ENCODE measurements at regions of chr18 and their contacts with region 1.

Region 1: GRCh38 chr18:22282311-22283112 is 113.1 kb downstream of the GATA6 start:
- DNase-seq: peak; percentile 72 to 80
- ATAC-seq: peak; percentile 83 to 92 (median 92)
- H3K4me3 ChIP-seq: no peak overlapping the region
- H3K4me3 Mint-ChIP-seq: peak overlapping the region; percentile 62
- H3K27ac ChIP-seq: peak overlapping the region; percentile 89
- H3K27ac Mint-ChIP-seq: peak overlapping the region; percentile 94 to 96
- H3K4me1 ChIP-seq: peaks cover 11% of the 10 kb centered on the region
- H3K4me1 Mint-ChIP-seq: peaks cover 27 to 40% of the 10 kb centered on the region in 2 donors
- H3K27me3 ChIP-seq: no peaks in the 10 kb centered on the region
- H3K27me3 Mint-ChIP-seq: peaks cover 3 to 7% of the 10 kb centered on the region in 2 donors
- CTCF ChIP-seq: no peak

Region 2: GRCh38 chr18:22257022-22257543 is 25.4 kb before region 1 on chr18:
- intact Hi-C with region 1: loop called (anchors 1 kb)
- DNase-seq: no peak
- ATAC-seq: no peak
- H3K4me3 ChIP-seq: no peak overlapping the region
- H3K4me3 Mint-ChIP-seq: no peak overlapping the region
- H3K27ac ChIP-seq: no peak overlapping the region
- H3K27ac Mint-ChIP-seq: peak overlapping the region in 1 of 2 donors; percentile 48
- H3K4me1 ChIP-seq: peaks cover 33% of the 10 kb centered on the region
- H3K4me1 Mint-ChIP-seq: peaks cover 45 to 57% of the 10 kb centered on the region in 2 donors
- H3K27me3 ChIP-seq: no peaks in the 10 kb centered on the region
- H3K27me3 Mint-ChIP-seq: peaks cover 28 to 34% of the 10 kb centered on the region in 2 donors
- CTCF ChIP-seq: no peak

Region 3: DNA sequence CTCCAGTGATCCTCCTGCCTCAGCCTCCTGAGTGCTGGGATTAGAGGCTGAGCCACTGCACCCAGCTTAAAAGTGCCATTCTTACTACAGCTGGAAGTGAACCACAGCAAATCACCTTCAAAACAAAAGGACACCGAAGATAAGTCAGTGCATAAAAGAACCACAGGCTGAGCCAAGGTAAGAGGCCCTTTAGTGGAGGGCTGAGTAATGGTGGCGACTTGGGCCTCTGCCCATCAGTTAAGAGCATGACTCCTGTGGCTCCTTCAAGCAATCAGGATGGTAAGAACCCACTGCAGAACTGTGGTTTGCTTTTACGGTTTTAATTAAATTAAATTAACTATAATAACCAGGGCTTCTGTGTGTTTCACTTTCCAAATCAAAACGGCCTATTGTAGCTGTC is 60.1 kb after region 1 on chr18:
- intact Hi-C with region 1: loop called (anchors 1 kb)
- DNase-seq: peak; percentile 38 to 74
- ATAC-seq: peak; percentile 15 to 28 (median 23)
- H3K4me3 ChIP-seq: no peak overlapping the region
- H3K4me3 Mint-ChIP-seq: peak overlapping the region; percentile 61
- H3K27ac ChIP-seq: peak overlapping the region; percentile 94
- H3K27ac Mint-ChIP-seq: peak overlapping the region; percentile 92 to 97
- H3K4me1 ChIP-seq: peaks cover 87% of the 10 kb centered on the region
- H3K4me1 Mint-ChIP-seq: peaks cover 77 to 89% of the 10 kb centered on the region in 2 donors
- H3K27me3 ChIP-seq: no peaks in the 10 kb centered on the region
- H3K27me3 Mint-ChIP-seq: no peaks in the 10 kb centered on the region
- CTCF ChIP-seq: no peak

Region 4: DNA sequence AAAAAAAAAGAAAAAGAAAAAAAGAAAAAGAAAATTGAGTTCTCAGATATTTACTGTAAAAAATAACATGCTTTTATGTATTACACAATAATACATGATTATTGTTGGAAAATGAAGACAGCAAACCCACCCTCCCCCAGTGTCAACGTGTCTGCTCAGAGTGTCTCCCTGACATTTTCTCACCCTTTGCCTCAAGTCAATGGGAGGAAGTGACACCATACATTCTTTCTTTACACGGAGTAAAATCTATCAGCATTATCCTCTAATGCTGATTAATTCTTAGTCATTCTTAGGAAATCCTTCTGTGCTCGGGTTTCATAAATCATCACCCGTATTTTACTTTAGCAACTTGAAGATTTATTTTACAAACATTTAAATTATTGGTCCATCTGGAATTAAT is 103.2 kb after region 1 on chr18:
- intact Hi-C with region 1: loop called (anchors 2 kb)
- DNase-seq: peak; percentile 38 to 51
- ATAC-seq: peak; percentile 95 to 99 (median 95)
- H3K4me3 ChIP-seq: no peak overlapping the region
- H3K4me3 Mint-ChIP-seq: peak overlapping the region; percentile 40
- H3K27ac ChIP-seq: peak overlapping the region; percentile 15
- H3K27ac Mint-ChIP-seq: peak overlapping the region; percentile 83
- H3K4me1 ChIP-seq: peaks cover 16% of the 10 kb centered on the region
- H3K4me1 Mint-ChIP-seq: peaks cover 46% of the 10 kb centered on the region in 2 donors
- H3K27me3 ChIP-seq: no peaks in the 10 kb centered on the region
- H3K27me3 Mint-ChIP-seq: no peaks in the 10 kb centered on the region
- CTCF ChIP-seq: no peak